ENCODE measurements at regions of chr2 and their contacts with region 1.

Region 1: GRCh38 chr2:39513641-39514094 is 76.6 kb upstream of the MAP4K3 start:
- DNase-seq: peak; percentile 85
- H3K4me3 ChIP-seq: no peak overlapping the region
- CTCF ChIP-seq: peak; percentile 73

Region 2: GRCh38 chr2:39494784-39495251 is 18.9 kb before region 1 on chr2:
- CTCF ChIA-PET with region 1: interaction called, 14 read pairs
- POLR2A ChIA-PET with region 1: no interaction called
- DNase-seq: peak; percentile 97
- H3K4me3 ChIP-seq: no peak overlapping the region
- CTCF ChIP-seq: no peak

Region 3: GRCh38 chr2:39593439-39594393 is 80.0 kb after region 1 on chr2:
- CTCF ChIA-PET with region 1: interaction called, 13 read pairs
- POLR2A ChIA-PET with region 1: no interaction called
- DNase-seq: peak; percentile 37
- H3K4me3 ChIP-seq: no peak overlapping the region
- CTCF ChIP-seq: peak; percentile 79

Measured in AG04449 (cell line).